Body of pancreas (tissue), 4 donors: ENCODE measurements at regions of chr5 and their contacts with region 1.

Region 1: GRCh38 chr5:134041570-134042411 is 37.0 kb upstream of the VDAC1 start:
- DNase-seq: no peak
- ATAC-seq: no peak
- H3K4me3 ChIP-seq: no peak overlapping the region
- H3K27ac ChIP-seq: no peak overlapping the region
- H3K4me1 ChIP-seq: peaks cover 5% of the 10 kb centered on the region
- H3K27me3 ChIP-seq: no peaks in the 10 kb centered on the region
- CTCF ChIP-seq: no peak
- POLR2A ChIP-seq: no peak

Region 2: GRCh38 chr5:134140530-134141201 is 98.9 kb after region 1 on chr5:
- intact Hi-C with region 1: loop called (anchors 5 kb)
- DNase-seq: peak; percentile 75 to 79 (median 78)
- ATAC-seq: peak; percentile 78
- H3K4me3 ChIP-seq: no peak overlapping the region
- H3K27ac ChIP-seq: no peak overlapping the region
- H3K4me1 ChIP-seq: peaks cover 5% of the 10 kb centered on the region
- H3K27me3 ChIP-seq: no peaks in the 10 kb centered on the region
- CTCF ChIP-seq: peak; percentile 30 to 79 (median 70)
- POLR2A ChIP-seq: no peak

Region 3: DNA sequence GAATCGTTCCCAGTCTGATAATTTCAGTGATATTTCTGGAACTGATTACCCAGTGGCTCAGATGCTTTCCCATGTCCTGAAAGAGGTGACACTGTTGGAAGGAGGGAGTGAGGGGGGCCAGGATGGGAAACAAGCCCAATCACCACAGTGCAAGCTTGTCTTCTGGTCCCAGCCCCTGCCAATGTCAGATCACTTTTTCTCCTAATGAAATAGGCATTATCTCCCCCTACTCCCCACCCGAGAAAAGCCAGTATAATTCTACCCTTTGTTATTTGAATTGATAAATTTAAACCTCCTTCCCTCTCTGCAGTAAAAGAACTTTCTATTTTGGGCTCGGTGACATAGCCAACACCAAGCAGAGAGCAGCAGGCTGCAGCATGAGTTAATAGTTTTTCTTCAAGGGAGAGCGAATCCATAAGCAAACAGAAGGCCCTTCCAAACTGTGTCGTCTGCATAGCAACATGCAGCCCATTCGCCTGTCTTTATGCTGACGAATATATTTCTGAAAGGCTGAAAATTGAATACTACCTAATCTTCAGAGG is 198.7 kb after region 1 on chr5:
- intact Hi-C with region 1: no loop called
- DNase-seq: peak; percentile 21 to 64 (median 36)
- ATAC-seq: peak; percentile 88
- H3K4me3 ChIP-seq: no peak overlapping the region
- H3K27ac ChIP-seq: peak overlapping the region in 3 of 4 donors; percentile 26 to 67 (median 30)
- H3K4me1 ChIP-seq: peaks cover 8% of the 10 kb centered on the region
- H3K27me3 ChIP-seq: no peaks in the 10 kb centered on the region
- CTCF ChIP-seq: no peak
- POLR2A ChIP-seq: no peak